Activated CD4-positive, alpha-beta T cell treated with anti-CD3 and anti-CD28 coated beads for 36 hours (primary cell): ENCODE measurements at regions of chr1 and their contacts with region 1.

Region 1: GRCh38 chr1:150321826-150322166 is 463 bp downstream of the PRPF3 start:
- DNase-seq: no peak
- ATAC-seq: no peak
- H3K4me3 Mint-ChIP-seq: peak overlapping the region; percentile 93
- H3K27ac Mint-ChIP-seq: peak overlapping the region; percentile 100
- H3K4me1 Mint-ChIP-seq: peaks cover 27% of the 10 kb centered on the region
- H3K27me3 Mint-ChIP-seq: no peaks in the 10 kb centered on the region

Region 2: DNA sequence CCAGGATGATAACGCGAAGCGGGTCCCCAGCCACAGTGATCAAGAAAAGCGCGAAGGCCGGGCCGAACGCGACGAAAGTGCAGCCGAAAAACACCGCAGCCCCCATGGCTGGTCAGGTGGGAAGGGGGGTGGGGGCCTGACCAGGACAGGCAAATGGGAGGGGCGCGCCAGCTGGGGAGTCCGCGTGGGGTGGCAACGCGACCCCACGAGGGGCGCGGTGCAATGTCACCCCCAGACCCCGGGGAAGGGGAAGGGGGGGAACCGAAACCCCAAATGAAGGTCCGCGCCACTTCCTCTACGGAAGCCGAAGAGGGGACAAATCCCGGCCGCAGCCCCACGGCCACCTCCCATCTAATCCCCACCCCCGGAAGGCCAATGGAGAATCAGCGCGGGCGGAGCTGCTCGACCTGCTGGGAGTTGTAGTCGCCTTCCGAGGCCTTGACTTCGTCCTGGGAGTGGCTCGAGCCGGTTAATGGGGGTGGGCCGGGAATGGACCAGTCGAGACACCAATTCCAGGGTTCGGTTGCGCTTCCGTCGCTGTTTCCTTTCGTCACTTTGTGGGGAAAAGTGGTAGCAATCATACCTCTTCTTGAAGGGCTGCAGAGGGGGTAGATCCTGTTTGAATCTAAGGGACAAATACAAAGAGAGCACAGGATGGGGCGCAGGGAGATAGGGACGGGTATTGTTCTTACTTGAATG is 52.9 kb before region 1 on chr1 and contains the start of gene APH1A:
- CTCF ChIA-PET with region 1: no interaction called
- POLR2A ChIA-PET with region 1: no interaction called
- intact Hi-C with region 1: loop called in 1 of 2 experiments (anchors 1 kb)
- DNase-seq: peak; percentile 97
- ATAC-seq: peak; percentile 99
- H3K4me3 Mint-ChIP-seq: peak within 1 kb of the TSS; percentile 89
- H3K27ac Mint-ChIP-seq: peak within 1 kb of the TSS; percentile 98
- H3K4me1 Mint-ChIP-seq: peaks cover 25% of the 10 kb centered on the region
- H3K27me3 Mint-ChIP-seq: no peaks in the 10 kb centered on the region
- total RNA-seq, gene APH1A: 62.4 to 89.3 TPM

Region 3: GRCh38 chr1:150281837-150282653 is 39.8 kb before region 1 on chr1 and contains the start of gene CIART:
- CTCF ChIA-PET with region 1: no interaction called
- POLR2A ChIA-PET with region 1: no interaction called
- intact Hi-C with region 1: loop called in 1 of 2 experiments (anchors 1 kb)
- DNase-seq: peak; percentile 89
- ATAC-seq: peak; percentile 96
- H3K4me3 Mint-ChIP-seq: peak within 1 kb of the TSS; percentile 77
- H3K27ac Mint-ChIP-seq: peak within 1 kb of the TSS; percentile 92
- H3K4me1 Mint-ChIP-seq: peaks cover 29% of the 10 kb centered on the region
- H3K27me3 Mint-ChIP-seq: no peaks in the 10 kb centered on the region
- total RNA-seq, gene CIART: 5.9 to 6.0 TPM

Region 4: GRCh38 chr1:150293433-150294168 is 28.2 kb before region 1 on chr1 and contains the start of gene MRPS21:
- CTCF ChIA-PET with region 1: interaction called, 5 read pairs
- POLR2A ChIA-PET with region 1: no interaction called
- intact Hi-C with region 1: loop called in 1 of 2 experiments (anchors 1 kb)
- DNase-seq: peak; percentile 93
- ATAC-seq: peak; percentile 99
- H3K4me3 Mint-ChIP-seq: peak within 1 kb of the TSS; percentile 95
- H3K27ac Mint-ChIP-seq: peak within 1 kb of the TSS; percentile 92
- H3K4me1 Mint-ChIP-seq: peaks cover 34% of the 10 kb centered on the region
- H3K27me3 Mint-ChIP-seq: no peaks in the 10 kb centered on the region
- total RNA-seq, gene MRPS21: 86.4 to 111 TPM

Region 5: DNA sequence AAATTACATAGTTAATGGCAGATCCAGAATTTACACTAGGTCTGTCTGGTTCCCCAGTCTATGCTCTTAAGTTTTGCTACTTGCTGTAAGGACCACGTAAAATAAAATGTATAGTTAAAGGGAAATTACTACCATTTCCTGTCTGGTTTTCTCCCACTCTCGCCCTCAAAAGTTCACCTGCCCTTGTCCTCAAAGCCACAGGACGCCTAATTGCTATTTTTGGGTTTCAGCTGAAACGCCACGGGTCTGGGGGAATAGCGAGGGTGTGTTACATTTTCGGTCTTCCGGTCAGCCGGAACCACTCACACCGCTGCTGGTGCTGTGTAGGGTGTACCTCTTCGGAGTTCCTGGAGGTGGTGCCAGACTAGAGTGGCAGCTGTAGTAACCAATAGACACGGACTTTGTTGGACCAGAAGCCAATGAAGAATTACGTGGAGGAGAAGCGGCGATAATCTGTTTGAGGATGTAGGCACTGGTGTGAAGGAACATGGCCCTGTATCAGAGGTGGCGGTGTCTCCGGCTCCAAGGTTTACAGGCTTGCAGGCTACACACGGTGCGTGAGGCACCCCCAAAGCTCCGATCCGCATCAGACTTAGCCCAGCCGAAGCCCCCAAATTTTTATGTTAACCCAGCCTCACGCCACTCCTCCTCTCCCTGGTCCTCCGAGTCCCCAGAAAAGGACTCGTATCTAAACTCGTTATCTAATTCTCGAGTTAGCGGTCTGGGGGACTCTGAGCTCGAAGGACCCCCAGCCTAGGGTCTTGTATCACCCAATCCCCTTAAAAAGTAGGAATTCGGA is 165.4 kb after region 1 on chr1 and contains the start of gene TARS2:
- CTCF ChIA-PET with region 1: no interaction called
- POLR2A ChIA-PET with region 1: no interaction called
- intact Hi-C with region 1: loop called in 1 of 2 experiments (anchors 1 kb)
- DNase-seq: peak; percentile 96
- ATAC-seq: peak; percentile 100
- H3K4me3 Mint-ChIP-seq: peak within 1 kb of the TSS; percentile 96
- H3K27ac Mint-ChIP-seq: peak within 1 kb of the TSS; percentile 99
- H3K4me1 Mint-ChIP-seq: peaks cover 13% of the 10 kb centered on the region
- H3K27me3 Mint-ChIP-seq: no peaks in the 10 kb centered on the region
- total RNA-seq, gene TARS2: 43.8 to 58.6 TPM